Activated B cell treated with CpG ODN at 0.5 μM for 24 hours (primary cell): ENCODE measurements at regions of chr15 and their contacts with region 1.

Region 1: DNA sequence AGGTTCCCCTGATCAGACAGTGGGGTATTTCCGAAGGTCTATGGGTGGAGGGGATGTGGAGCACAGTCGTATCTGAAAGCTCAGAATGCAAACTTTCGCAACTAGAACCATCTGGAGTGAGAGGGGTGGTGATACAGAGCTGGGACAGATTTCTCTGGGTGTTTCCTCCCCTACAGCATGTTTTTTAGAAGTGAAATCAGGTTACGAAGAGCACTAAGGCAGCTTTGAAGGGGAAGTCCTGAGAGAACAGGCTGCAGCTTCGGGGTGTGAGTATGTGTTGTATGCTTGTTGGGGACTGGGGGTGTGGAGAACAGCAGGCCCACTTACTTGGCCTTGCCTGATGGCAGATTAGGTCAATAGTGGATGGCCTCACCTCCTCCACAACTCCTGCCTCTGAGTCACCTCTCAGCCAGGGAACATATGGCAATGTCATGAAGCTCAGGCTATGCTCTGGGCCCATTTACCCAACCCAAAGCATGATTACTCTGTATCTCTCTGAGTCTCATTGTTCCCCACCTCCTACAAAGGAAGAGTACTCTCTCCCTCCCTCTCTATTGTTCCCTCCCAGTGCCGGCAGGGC is 107.2 kb upstream of the RASGRP1 start:
- DNase-seq: peak; percentile 22
- ATAC-seq: peak; percentile 66
- H3K4me3 Mint-ChIP-seq: peak overlapping the region; percentile 65
- H3K27ac Mint-ChIP-seq: peak overlapping the region; percentile 94
- H3K4me1 Mint-ChIP-seq: peaks cover 78% of the 10 kb centered on the region
- H3K27me3 Mint-ChIP-seq: no peaks in the 10 kb centered on the region
- CTCF ChIP-seq: no peak

Region 2: DNA sequence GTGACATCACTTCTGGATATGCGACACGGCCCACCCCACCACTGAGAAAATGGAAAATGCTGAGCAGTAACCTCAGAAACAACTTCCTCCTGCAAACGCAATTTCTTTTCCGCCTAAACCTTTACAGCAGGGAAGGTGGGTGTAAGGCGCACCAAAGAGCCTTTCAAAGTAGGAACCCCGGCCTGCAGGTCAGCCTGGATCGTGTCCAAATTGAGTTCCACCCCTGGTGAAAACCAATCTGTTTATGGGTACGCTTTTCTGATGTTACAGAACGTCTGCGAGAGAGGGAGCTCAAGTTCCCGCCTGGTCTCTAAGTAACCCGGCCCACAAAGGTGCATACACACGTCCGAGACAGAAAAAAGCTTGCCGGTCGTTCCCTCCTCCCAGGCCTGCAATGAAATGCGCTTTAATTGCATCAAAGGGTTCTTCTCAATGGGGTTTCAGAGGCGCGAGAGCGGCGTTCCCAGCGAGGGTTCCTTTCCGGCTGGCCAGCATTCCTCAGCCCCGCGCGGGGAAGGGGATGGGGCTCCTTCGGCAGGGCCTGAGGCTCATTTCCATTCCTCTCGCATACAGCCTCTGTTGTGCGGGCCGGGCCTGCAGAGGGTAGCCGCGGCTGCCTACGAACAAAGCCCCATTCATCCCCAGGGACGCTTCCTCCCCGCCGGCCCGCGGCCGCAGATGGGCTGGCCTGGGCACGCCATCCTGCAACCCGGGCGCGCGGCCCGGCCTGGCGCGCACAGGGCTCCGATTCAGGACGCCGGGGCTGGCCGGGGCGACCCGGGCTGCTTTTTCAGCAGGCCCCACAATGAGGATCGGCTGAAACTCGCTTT is 599.2 kb before region 1 on chr15:
- CTCF ChIA-PET with region 1: no interaction called
- POLR2A ChIA-PET with region 1: no interaction called
- intact Hi-C with region 1: loop called (anchors 5 kb)
- DNase-seq: peak; percentile 37
- ATAC-seq: peak; percentile 63
- H3K4me3 Mint-ChIP-seq: peak overlapping the region; percentile 86
- H3K27ac Mint-ChIP-seq: peak overlapping the region; percentile 63
- H3K4me1 Mint-ChIP-seq: peaks cover 60% of the 10 kb centered on the region
- H3K27me3 Mint-ChIP-seq: peaks cover 11% of the 10 kb centered on the region
- CTCF ChIP-seq: no peak

Region 3: GRCh38 chr15:38260077-38260476 is 411.7 kb before region 1 on chr15:
- CTCF ChIA-PET with region 1: no interaction called
- POLR2A ChIA-PET with region 1: no interaction called
- intact Hi-C with region 1: no loop called
- DNase-seq: no peak
- ATAC-seq: no peak
- H3K4me3 Mint-ChIP-seq: no peak overlapping the region
- H3K27ac Mint-ChIP-seq: no peak overlapping the region
- H3K4me1 Mint-ChIP-seq: no peaks in the 10 kb centered on the region
- H3K27me3 Mint-ChIP-seq: no peaks in the 10 kb centered on the region
- CTCF ChIP-seq: no peak

Region 4: GRCh38 chr15:38453971-38454695 is 217.6 kb before region 1 on chr15 and contains the start of gene FAM98B:
- CTCF ChIA-PET with region 1: no interaction called
- POLR2A ChIA-PET with region 1: interaction called, 8 read pairs
- intact Hi-C with region 1: loop called (anchors 1 kb)
- DNase-seq: peak; percentile 92
- ATAC-seq: peak; percentile 90
- H3K4me3 Mint-ChIP-seq: peak within 1 kb of the TSS; percentile 97
- H3K27ac Mint-ChIP-seq: peak within 1 kb of the TSS; percentile 91
- H3K4me1 Mint-ChIP-seq: peaks cover 35% of the 10 kb centered on the region
- H3K27me3 Mint-ChIP-seq: peaks cover 2% of the 10 kb centered on the region
- CTCF ChIP-seq: no peak
- total RNA-seq, gene FAM98B: 29.9 and 30.7 TPM in 2 replicates

Region 5: GRCh38 chr15:38610748-38611147 is 61.0 kb before region 1 on chr15:
- CTCF ChIA-PET with region 1: no interaction called
- POLR2A ChIA-PET with region 1: interaction called, 5 read pairs
- intact Hi-C with region 1: loop called (anchors 2 kb)
- DNase-seq: peak; percentile 20
- ATAC-seq: peak; percentile 98
- H3K4me3 Mint-ChIP-seq: peak overlapping the region; percentile 11
- H3K27ac Mint-ChIP-seq: peak overlapping the region; percentile 13
- H3K4me1 Mint-ChIP-seq: peaks cover 35% of the 10 kb centered on the region
- H3K27me3 Mint-ChIP-seq: no peaks in the 10 kb centered on the region
- CTCF ChIP-seq: no peak

Region 6: GRCh38 chr15:38647683-38648082 is 24.1 kb before region 1 on chr15:
- CTCF ChIA-PET with region 1: interaction called, 6 read pairs
- POLR2A ChIA-PET with region 1: interaction called, 76 read pairs
- intact Hi-C with region 1: loop called (anchors 1 kb)
- DNase-seq: no peak
- ATAC-seq: no peak
- H3K4me3 Mint-ChIP-seq: no peak overlapping the region
- H3K27ac Mint-ChIP-seq: no peak overlapping the region
- H3K4me1 Mint-ChIP-seq: peaks cover 60% of the 10 kb centered on the region
- H3K27me3 Mint-ChIP-seq: no peaks in the 10 kb centered on the region
- CTCF ChIP-seq: no peak